AG04450 (cell line): ENCODE measurements at regions of chr19 and their contacts with region 1.

Region 1: GRCh38 chr19:4791170-4792018 is at the start of gene FEM1A:
- DNase-seq: peak; percentile 100
- H3K4me3 ChIP-seq: peak within 1 kb of the TSS; percentile 70
- H3K27ac ChIP-seq: peak within 1 kb of the TSS; percentile 39
- H3K27me3 ChIP-seq: no peaks in the 10 kb centered on the region
- CTCF ChIP-seq: peak; percentile 99
- polyA plus RNA-seq, gene FEM1A: 3.0 and 4.0 TPM in 2 replicates

Region 2: DNA sequence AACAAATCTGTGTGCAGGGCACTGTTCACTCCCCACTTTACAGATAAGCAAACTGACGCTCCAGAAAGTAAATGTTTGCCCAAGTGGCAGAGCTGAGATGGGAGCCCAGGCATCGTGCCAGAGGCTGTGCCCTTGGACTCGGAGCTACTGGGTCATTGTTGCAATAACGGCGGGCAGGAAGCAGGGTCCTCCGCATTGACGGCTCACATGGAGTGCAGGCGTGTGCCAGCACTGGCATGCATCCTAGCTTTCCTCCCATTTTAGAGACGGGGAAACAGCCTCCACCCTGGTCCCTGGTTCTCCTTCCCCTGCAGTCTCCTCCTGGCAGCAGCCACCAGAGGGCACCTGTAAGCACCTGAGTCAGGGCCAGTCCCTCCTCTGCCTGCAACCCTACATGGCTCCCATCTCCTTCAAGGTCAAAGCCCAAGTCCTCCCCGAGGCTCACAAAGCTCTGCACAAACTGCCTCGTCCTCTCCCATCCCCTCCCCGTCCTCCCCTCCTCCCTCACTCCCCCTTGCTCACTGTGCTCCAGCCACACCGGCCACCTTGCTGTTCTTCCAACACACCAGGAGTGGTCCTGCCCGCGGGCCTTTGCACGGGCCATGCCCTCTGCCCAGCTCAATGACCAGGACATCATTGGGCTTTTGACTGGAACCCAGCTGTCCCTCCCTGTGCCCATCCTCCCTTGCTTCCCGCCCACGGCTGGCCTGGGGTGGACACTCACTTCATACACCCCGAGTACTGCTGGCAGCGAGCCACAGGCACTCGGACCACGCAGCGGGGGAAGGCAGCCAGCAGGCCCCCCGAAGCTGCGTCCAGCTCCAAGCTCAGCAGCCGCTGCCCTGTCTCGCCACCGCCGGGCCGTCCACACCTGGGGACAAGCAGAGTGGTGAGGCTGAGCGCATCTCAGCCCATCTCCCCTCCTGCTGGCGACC is 243.8 kb before region 1 on chr19:
- CTCF ChIA-PET with region 1: no interaction called
- POLR2A ChIA-PET with region 1: no interaction called
- DNase-seq: no peak
- H3K4me3 ChIP-seq: no peak overlapping the region
- H3K27ac ChIP-seq: no peak overlapping the region
- H3K27me3 ChIP-seq: no peaks in the 10 kb centered on the region
- CTCF ChIP-seq: peak; percentile 33; the same call in 1 of the 2 replicates

Region 3: GRCh38 chr19:4660181-4660791 is 131.1 kb before region 1 on chr19:
- CTCF ChIA-PET with region 1: no interaction called
- POLR2A ChIA-PET with region 1: no interaction called
- DNase-seq: no peak
- H3K4me3 ChIP-seq: no peak overlapping the region
- H3K27ac ChIP-seq: no peak overlapping the region
- H3K27me3 ChIP-seq: no peaks in the 10 kb centered on the region
- CTCF ChIP-seq: peak; percentile 9; the same call in 1 of the 2 replicates

Region 4: GRCh38 chr19:4723367-4724187 is 67.8 kb before region 1 on chr19 and contains the start of gene DPP9:
- CTCF ChIA-PET with region 1: interaction called, 220 read pairs
- POLR2A ChIA-PET with region 1: interaction called, 12 read pairs
- DNase-seq: peak; percentile 96
- H3K4me3 ChIP-seq: peak within 1 kb of the TSS; percentile 97
- H3K27ac ChIP-seq: peak within 1 kb of the TSS; percentile 39
- H3K27me3 ChIP-seq: no peaks in the 10 kb centered on the region
- CTCF ChIP-seq: peak; percentile 31
- polyA plus RNA-seq, gene DPP9: 5.6 and 9.0 TPM in 2 replicates

Region 5: GRCh38 chr19:4732680-4733114 is 58.7 kb before region 1 on chr19:
- CTCF ChIA-PET with region 1: interaction called, 220 read pairs
- POLR2A ChIA-PET with region 1: interaction called, 4 read pairs
- DNase-seq: peak; percentile 26
- H3K4me3 ChIP-seq: no peak overlapping the region
- H3K27ac ChIP-seq: no peak overlapping the region
- H3K27me3 ChIP-seq: peaks cover 9% of the 10 kb centered on the region
- CTCF ChIP-seq: peak; percentile 82

Region 6: GRCh38 chr19:4738734-4739133 is 52.7 kb before region 1 on chr19:
- CTCF ChIA-PET with region 1: interaction called, 220 read pairs
- POLR2A ChIA-PET with region 1: no interaction called
- DNase-seq: no peak
- H3K4me3 ChIP-seq: no peak overlapping the region
- H3K27ac ChIP-seq: no peak overlapping the region
- H3K27me3 ChIP-seq: peaks cover 11% of the 10 kb centered on the region
- CTCF ChIP-seq: no peak

Region 7: GRCh38 chr19:4803736-4804695 is 12.6 kb after region 1 on chr19:
- CTCF ChIA-PET with region 1: interaction called, 17 read pairs
- POLR2A ChIA-PET with region 1: interaction called, 5 read pairs
- DNase-seq: no peak
- H3K4me3 ChIP-seq: no peak overlapping the region
- H3K27ac ChIP-seq: no peak overlapping the region
- H3K27me3 ChIP-seq: no peaks in the 10 kb centered on the region
- CTCF ChIP-seq: peak; percentile 71

Region 8: DNA sequence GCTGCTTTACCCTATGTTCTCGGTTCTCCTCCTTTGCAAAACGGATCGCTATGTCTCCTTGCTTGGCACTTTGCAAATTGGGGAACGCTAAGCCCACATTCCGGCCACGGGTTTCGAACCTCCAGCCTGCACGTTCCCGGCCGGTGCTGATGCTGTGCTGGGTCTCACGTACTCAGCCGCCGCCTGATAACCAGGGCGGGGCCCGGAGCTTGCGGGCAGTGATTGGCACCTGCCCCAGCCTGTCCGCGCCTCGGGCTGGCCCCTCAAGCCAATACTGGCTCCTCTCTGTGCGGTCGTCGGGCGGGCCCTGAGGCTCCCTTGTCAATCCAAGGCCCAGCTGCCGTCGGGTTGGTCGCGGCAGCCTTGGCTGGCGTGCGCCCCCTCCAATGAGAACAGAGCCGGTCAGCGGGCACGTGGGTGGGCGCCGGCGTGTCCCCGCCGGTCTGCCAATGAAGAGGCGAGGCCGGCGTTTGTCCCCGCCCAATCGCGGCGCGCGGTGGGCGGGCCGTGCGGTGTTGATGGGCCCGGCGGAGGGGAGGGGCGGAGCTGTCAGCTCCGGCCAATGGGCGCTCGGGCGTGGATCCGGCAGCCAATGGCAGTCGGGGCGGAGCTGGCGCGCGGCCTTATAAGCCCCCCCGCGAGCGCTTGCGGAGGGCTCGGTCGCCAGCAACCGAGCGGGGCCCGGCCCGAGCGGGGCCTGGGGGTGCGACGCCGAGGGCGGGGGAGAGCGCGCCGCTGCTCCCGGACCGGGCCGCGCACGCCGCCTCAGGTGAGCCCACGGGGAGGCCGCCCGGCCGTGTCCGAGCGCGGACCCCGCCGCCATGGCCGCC is 177.3 kb after region 1 on chr19 and contains the start of gene KDM4B:
- CTCF ChIA-PET with region 1: interaction called, 13 read pairs
- POLR2A ChIA-PET with region 1: interaction called, 13 read pairs
- DNase-seq: peak; percentile 99
- H3K4me3 ChIP-seq: peak within 1 kb of the TSS; percentile 84
- H3K27ac ChIP-seq: peak within 1 kb of the TSS; percentile 61
- H3K27me3 ChIP-seq: no peaks in the 10 kb centered on the region
- CTCF ChIP-seq: no peak
- polyA plus RNA-seq, gene KDM4B: 7.7 and 10.6 TPM in 2 replicates

Region 9: GRCh38 chr19:5149932-5150901 is 358.8 kb after region 1 on chr19:
- CTCF ChIA-PET with region 1: interaction called, 13 read pairs
- POLR2A ChIA-PET with region 1: no interaction called
- DNase-seq: no peak
- H3K4me3 ChIP-seq: no peak overlapping the region
- H3K27ac ChIP-seq: no peak overlapping the region
- H3K27me3 ChIP-seq: no peaks in the 10 kb centered on the region
- CTCF ChIP-seq: no peak